A549 (cell line): ENCODE measurements at regions of chr5 and their contacts with region 1.

Region 1: GRCh38 chr5:136062366-136063274 is 33.8 kb downstream of the TGFBI start:
- DNase-seq: peak in 1 of 2 experiments; percentile 71
- ATAC-seq: no peak
- H3K4me3 ChIP-seq: no peak overlapping the region
- H3K27ac ChIP-seq: peak overlapping the region; percentile 86 to 93
- H3K4me1 ChIP-seq: peaks cover 97% of the 10 kb centered on the region
- CTCF ChIP-seq: peak; percentile 53
- EP300 ChIP-seq: no peak
- POLR2A ChIP-seq: no peak
- RAD21 ChIP-seq: peak; percentile 77 to 82

Region 2: DNA sequence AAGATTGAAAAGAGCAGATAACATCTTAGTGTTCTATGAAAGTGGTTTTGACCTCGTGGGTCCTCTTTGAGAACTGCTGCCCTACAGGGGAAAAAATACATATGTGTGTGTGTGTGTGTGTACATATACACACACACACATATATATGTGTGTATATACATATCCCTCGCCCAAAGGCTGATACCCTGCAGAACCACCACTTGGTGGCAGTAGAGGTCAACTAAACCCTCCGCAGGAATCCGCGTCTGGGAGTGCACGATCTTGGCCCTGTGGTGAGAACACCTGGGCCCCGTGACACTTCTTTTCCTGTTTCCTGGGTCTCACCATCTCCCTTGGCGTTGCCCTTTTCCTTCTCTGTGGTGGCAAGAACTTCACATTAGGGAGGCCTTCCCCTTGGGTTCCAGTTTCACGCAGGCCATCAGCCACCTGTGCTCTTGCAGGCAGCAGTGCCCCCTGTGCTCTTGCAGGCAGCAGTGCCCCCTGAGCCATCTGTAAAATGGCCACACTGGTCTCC is 175.2 kb before region 1 on chr5:
- CTCF ChIA-PET with region 1: interaction called, 16 read pairs
- POLR2A ChIA-PET with region 1: no interaction called
- DNase-seq: peak; percentile 74 to 78
- ATAC-seq: peak; percentile 92 to 97
- H3K4me3 ChIP-seq: no peak overlapping the region
- H3K27ac ChIP-seq: peak overlapping the region; percentile 9 to 65; a peak in 4 of 6 replicates
- H3K4me1 ChIP-seq: peaks cover 22% of the 10 kb centered on the region
- CTCF ChIP-seq: peak; percentile 98
- EP300 ChIP-seq: no peak
- POLR2A ChIP-seq: no peak
- RAD21 ChIP-seq: peak; percentile 97 to 98

Region 3: DNA sequence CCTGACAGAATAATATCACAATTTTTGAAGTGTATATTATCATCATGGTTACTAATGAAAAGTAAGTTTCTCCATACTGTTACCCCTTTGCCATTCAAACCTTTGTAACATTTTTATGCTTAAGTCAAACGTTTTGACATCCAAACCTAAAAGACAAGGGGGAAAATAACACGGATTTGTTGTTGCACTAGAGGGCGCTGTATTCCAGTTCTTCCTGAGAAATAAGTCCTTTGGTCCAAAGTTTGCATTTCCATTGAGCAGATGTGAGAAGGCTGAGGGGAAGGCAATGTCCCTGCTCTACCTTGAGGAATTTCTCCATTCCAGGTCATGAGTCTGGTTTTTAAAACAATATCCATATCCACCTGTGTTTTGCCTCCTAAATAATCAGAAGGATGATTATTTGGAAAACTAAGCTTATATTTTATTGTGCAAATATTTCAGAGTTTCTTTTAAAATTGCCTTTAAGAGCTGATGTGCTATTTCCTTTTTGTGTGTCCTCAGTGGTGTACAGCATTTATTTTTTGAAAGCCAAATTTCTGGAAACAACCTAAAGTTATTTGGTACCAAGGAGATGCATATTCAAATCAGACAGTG is 117.6 kb before region 1 on chr5:
- CTCF ChIA-PET with region 1: interaction called, 40 read pairs
- POLR2A ChIA-PET with region 1: no interaction called
- DNase-seq: peak; percentile 44 to 89
- ATAC-seq: peak; percentile 74 to 89; a peak in 5 of 6 replicates
- H3K4me3 ChIP-seq: no peak overlapping the region
- H3K27ac ChIP-seq: peak overlapping the region; percentile 55 to 63
- H3K4me1 ChIP-seq: peaks cover 15% of the 10 kb centered on the region
- CTCF ChIP-seq: peak; percentile 93
- EP300 ChIP-seq: no peak
- POLR2A ChIP-seq: no peak
- RAD21 ChIP-seq: peak; percentile 94 to 96

Region 4: GRCh38 chr5:136014049-136015002 is 48.3 kb before region 1 on chr5:
- CTCF ChIA-PET with region 1: interaction called, 13 read pairs
- POLR2A ChIA-PET with region 1: interaction called, 6 read pairs
- DNase-seq: no peak
- ATAC-seq: no peak
- H3K4me3 ChIP-seq: no peak overlapping the region
- H3K27ac ChIP-seq: peak overlapping the region; percentile 96 to 97
- H3K4me1 ChIP-seq: peaks cover 83% of the 10 kb centered on the region
- CTCF ChIP-seq: no peak
- EP300 ChIP-seq: no peak
- POLR2A ChIP-seq: no peak
- RAD21 ChIP-seq: no peak

Region 5: DNA sequence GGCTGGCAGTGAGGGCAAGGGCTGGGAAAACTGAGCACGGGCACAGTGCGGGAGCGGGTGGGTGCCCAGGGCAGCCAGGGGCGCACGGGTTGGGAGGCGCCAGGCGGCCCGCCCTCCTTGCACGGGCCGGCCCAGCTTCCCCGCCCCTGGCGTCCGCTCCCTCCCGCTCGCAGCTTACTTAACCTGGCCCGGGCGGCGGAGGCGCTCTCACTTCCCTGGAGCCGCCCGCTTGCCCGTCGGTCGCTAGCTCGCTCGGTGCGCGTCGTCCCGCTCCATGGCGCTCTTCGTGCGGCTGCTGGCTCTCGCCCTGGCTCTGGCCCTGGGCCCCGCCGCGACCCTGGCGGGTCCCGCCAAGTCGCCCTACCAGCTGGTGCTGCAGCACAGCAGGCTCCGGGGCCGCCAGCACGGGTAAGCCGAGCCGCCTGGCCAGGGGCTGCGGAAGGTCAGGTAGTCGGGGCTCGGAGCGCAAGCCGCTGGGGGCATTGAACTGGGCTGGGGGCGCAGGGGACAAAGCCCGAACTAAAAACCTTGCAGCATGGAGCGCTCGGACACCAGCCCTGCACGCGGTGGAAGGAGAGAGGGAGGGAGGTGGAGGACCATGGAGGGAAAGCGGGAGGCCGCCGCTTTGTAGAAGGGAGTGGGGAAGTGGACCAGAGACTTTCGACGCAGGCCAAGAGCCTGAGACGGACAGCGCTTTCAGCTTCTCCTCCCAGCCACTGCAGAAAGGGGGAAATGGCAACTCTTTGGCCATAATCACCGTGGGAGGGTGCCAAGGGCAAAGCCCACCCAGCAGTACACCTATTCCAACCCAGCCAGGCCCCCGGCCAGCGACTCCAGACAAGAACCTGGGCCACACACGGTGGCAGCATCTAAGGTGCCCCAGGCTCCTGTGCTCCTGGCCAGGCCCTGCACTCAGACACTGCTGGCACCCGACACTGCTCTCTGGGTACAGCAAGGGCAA is 33.6 kb before region 1 on chr5 and contains the start of gene TGFBI:
- CTCF ChIA-PET with region 1: interaction called, 79 read pairs
- POLR2A ChIA-PET with region 1: interaction called, 13 read pairs
- DNase-seq: peak; percentile 78 to 83
- ATAC-seq: peak; percentile 89 to 94
- H3K4me3 ChIP-seq: peak within 1 kb of the TSS; percentile 97
- H3K27ac ChIP-seq: peak within 1 kb of the TSS; percentile 99 to 100
- H3K4me1 ChIP-seq: peaks cover 52% of the 10 kb centered on the region
- CTCF ChIP-seq: no peak; the same call in 2 of the 3 replicates
- EP300 ChIP-seq: no peak
- POLR2A ChIP-seq: peak; percentile 98
- RAD21 ChIP-seq: peak in 1 of 2 experiments; percentile 51; a peak in 3 of 5 replicates
- polyA plus RNA-seq, gene TGFBI: 1,135 and 1,466 TPM in 2 replicates

Region 6: DNA sequence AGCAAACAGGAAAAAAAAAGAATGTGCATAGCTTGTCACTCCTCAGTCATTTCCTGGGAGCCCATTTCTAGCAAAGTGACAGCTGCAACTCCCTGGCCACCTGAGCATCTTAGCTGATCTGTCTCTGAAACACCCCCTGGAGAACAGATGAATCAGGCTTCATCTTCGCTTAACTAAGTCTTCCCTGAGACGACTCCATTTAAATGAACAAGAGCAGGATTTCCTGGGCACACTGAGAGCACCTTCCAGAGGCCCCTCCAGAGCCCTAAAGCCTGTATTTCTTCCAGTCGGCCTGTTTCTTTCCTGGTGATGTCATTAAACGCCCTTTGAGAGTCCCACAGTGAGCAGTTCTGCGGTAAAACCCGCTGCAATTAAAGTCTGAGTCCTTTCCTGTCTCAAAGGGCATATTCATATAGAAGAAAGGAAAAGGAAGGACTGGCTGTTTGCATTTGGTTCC is 19.9 kb before region 1 on chr5:
- CTCF ChIA-PET with region 1: interaction called, 79 read pairs
- POLR2A ChIA-PET with region 1: interaction called, 8 read pairs
- DNase-seq: no peak
- ATAC-seq: no peak
- H3K4me3 ChIP-seq: no peak overlapping the region
- H3K27ac ChIP-seq: peak overlapping the region; percentile 23 to 77; a peak in 4 of 6 replicates
- H3K4me1 ChIP-seq: peaks cover 89% of the 10 kb centered on the region
- CTCF ChIP-seq: no peak
- EP300 ChIP-seq: no peak
- POLR2A ChIP-seq: no peak
- RAD21 ChIP-seq: no peak

Region 7: DNA sequence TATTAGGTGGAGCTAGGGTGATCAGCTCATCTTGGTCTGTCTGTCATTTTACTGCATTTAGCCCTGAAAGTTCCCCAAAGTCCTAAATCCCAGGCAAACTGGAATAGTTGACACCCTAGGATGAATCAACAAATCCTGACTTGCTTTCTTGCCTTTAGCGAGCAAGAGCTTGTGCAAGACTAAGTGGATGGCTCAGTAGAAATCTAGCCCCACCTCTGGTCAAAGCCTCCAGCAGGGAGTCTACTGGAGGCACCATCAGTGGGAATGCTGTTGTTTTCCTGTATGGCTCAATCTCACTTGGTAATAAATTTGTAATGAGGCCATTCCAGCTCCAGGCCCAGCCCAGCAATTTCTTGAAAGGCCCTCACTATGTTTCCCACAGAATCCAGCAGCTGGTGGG is 346.4 kb after region 1 on chr5:
- CTCF ChIA-PET with region 1: no interaction called
- POLR2A ChIA-PET with region 1: no interaction called
- DNase-seq: no peak
- ATAC-seq: no peak
- H3K4me3 ChIP-seq: no peak overlapping the region
- H3K27ac ChIP-seq: no peak overlapping the region
- H3K4me1 ChIP-seq: no peaks in the 10 kb centered on the region
- CTCF ChIP-seq: no peak
- EP300 ChIP-seq: no peak
- POLR2A ChIP-seq: no peak
- RAD21 ChIP-seq: no peak

Region 8: GRCh38 chr5:136891175-136891972 is 828.8 kb after region 1 on chr5:
- CTCF ChIA-PET with region 1: no interaction called
- POLR2A ChIA-PET with region 1: no interaction called
- DNase-seq: no peak
- ATAC-seq: no peak
- H3K4me3 ChIP-seq: no peak overlapping the region
- H3K27ac ChIP-seq: no peak overlapping the region
- H3K4me1 ChIP-seq: no peaks in the 10 kb centered on the region
- CTCF ChIP-seq: no peak
- EP300 ChIP-seq: no peak
- POLR2A ChIP-seq: no peak
- RAD21 ChIP-seq: no peak